Thyroid gland (tissue), 4 donors: ENCODE measurements at regions of chr10 and their contacts with region 1.

Region 1: GRCh38 chr10:98467506-98468346 is 21.0 kb upstream of the HPS1 start:
- DNase-seq: peak; percentile 70 to 74
- H3K4me3 ChIP-seq: peak overlapping the region in 2 of 3 donors; percentile 14 to 48
- H3K27ac ChIP-seq: no peak overlapping the region
- H3K4me1 ChIP-seq: peaks cover 0 to 3% of the 10 kb centered on the region in 2 donors
- H3K27me3 ChIP-seq: no peaks in the 10 kb centered on the region
- CTCF ChIP-seq: peak; percentile 54 to 93 (median 82)
- POLR2A ChIP-seq: no peak

Region 2: DNA sequence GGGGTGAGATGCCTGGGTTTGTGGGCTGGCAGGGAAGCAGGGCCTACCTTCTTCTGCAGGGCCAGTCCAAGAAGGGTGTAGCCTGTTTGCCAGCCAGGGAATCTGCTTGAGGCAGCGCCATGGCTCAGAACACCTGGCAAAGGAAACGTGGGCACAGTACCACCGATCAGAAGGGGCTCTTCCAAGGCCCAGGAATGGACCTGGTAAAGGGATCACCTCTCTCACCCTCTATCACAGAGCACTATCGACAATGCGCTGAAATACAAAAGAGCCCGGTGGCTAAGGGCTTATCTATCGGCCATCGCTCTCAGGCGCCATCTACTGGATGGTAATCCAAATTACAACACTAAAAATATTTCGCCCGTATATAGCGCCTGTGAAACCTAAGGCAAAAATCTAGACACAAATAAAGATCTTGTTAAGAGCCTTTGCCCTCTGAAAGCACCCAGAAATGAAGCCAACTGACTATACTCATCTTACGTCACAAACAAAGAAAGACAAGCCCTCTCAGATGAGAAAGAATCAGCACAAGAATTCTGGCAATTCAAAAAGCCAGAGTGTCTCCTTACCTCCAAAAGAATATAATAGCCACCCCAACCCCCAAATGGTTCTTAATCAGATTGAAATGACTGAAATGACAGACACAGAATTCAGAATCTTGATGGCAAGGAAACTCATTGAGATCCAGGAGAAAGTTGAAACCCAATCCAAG is 196.8 kb after region 1 on chr10:
- intact Hi-C with region 1: loop called (anchors 5 kb)
- DNase-seq: peak in 1 of 2 donors; percentile 2
- H3K4me3 ChIP-seq: no peak overlapping the region
- H3K27ac ChIP-seq: no peak overlapping the region
- H3K4me1 ChIP-seq: no peaks in the 10 kb centered on the region
- H3K27me3 ChIP-seq: no peaks in the 10 kb centered on the region
- CTCF ChIP-seq: peak in 4 of 6 experiments; percentile 15 to 47 (median 28)
- POLR2A ChIP-seq: no peak

Region 3: GRCh38 chr10:99248824-99249223 is 781.1 kb after region 1 on chr10:
- intact Hi-C with region 1: loop called (anchors 2 kb)
- DNase-seq: no peak
- H3K4me3 ChIP-seq: no peak overlapping the region
- H3K27ac ChIP-seq: no peak overlapping the region
- H3K4me1 ChIP-seq: no peaks in the 10 kb centered on the region
- H3K27me3 ChIP-seq: no peaks in the 10 kb centered on the region
- CTCF ChIP-seq: no peak
- POLR2A ChIP-seq: no peak